ENCODE measurements at regions of chrX and their contacts with region 1.

Region 1: GRCh38 chrX:37745354-37745753 is 34.5 kb upstream of the CYBB start:
- DNase-seq: peak; percentile 76 to 88
- H3K4me3 ChIP-seq: no peak overlapping the region
- H3K27ac ChIP-seq: peak overlapping the region in 2 of 5 donors; percentile 23 to 51
- H3K4me1 ChIP-seq: no peaks in the 10 kb centered on the region
- H3K27me3 ChIP-seq: peaks cover 0 to 9% (median 0%) of the 10 kb centered on the region in 3 donors
- CTCF ChIP-seq: peak in 5 of 7 experiments; percentile 66 to 81 (median 68)
- EP300 ChIP-seq: no peak
- POLR2A ChIP-seq: no peak

Region 2: GRCh38 chrX:37825209-37825842 is 80.0 kb after region 1 on chrX:
- intact Hi-C with region 1: loop called (anchors 10 kb)
- DNase-seq: peak; percentile 57 to 68
- H3K4me3 ChIP-seq: no peak overlapping the region
- H3K27ac ChIP-seq: peak overlapping the region in 1 of 5 donors; percentile 17
- H3K4me1 ChIP-seq: peaks cover 0 to 14% (median 9%) of the 10 kb centered on the region in 4 donors
- H3K27me3 ChIP-seq: no peaks in the 10 kb centered on the region
- CTCF ChIP-seq: peak in 5 of 7 experiments; percentile 67 to 88 (median 84)
- EP300 ChIP-seq: no peak
- POLR2A ChIP-seq: no peak

Region 3: DNA sequence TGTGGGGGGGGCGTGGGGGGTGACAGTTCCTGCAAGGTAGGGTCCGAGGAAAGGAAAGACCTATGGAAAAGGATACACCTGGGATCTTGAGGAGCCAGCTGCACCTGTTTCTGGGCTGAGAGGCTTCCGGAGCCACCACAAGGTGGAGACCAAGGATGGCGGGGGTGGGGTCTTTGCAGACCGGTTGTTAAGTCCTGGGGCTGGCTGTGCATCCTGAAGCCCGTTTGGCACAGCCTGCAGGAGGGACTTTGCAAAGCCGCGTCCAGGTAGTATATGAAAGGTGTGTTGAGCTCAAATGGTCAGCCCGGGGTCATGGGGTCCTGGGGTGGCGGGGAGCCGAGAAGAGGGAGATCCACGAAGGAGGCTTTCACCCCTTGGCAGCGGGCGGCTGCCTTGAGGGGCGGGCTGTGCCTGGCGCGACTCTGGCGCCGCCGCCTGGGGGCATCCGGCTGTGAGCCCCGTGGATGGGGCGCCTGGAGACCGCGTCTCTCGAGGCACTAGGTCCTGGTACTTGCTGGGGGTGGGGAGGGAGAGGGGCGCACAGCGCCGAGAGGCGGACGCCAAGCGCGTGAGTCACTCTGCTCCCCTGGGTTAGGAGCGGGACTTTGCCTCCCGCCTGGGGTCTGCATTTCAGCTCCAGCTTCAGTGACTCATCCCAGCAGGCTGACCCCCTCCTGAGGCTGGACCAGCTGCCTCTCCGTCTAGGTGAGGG is 160.2 kb after region 1 on chrX:
- intact Hi-C with region 1: loop called (anchors 10 kb)
- DNase-seq: peak; percentile 25 to 46
- H3K4me3 ChIP-seq: peak overlapping the region in 3 of 4 donors; percentile 20 to 35 (median 26)
- H3K27ac ChIP-seq: no peak overlapping the region
- H3K4me1 ChIP-seq: peaks cover 0 to 8% (median 6%) of the 10 kb centered on the region in 4 donors
- H3K27me3 ChIP-seq: peaks cover 0 to 16% (median 14%) of the 10 kb centered on the region in 3 donors
- CTCF ChIP-seq: no peak
- EP300 ChIP-seq: no peak
- POLR2A ChIP-seq: no peak

Measured in stomach (tissue), 19 donors.